ENCODE measurements at regions of chr12 and their contacts with region 1.

Region 1: GRCh38 chr12:20463913-20464524 is 95.7 kb downstream of the PDE3A start:
- DNase-seq: no peak
- H3K4me3 Mint-ChIP-seq: no peak overlapping the region
- H3K27ac Mint-ChIP-seq: no peak overlapping the region
- H3K4me1 Mint-ChIP-seq: no peaks in the 10 kb centered on the region
- H3K27me3 Mint-ChIP-seq: no peaks in the 10 kb centered on the region

Region 2: GRCh38 chr12:20601668-20602280 is 137.8 kb after region 1 on chr12:
- CTCF ChIA-PET with region 1: no interaction called
- POLR2A ChIA-PET with region 1: no interaction called
- intact Hi-C with region 1: loop called (anchors 10 kb)
- DNase-seq: no peak
- H3K4me3 Mint-ChIP-seq: no peak overlapping the region
- H3K27ac Mint-ChIP-seq: no peak overlapping the region
- H3K4me1 Mint-ChIP-seq: no peaks in the 10 kb centered on the region
- H3K27me3 Mint-ChIP-seq: no peaks in the 10 kb centered on the region